GM18951 (cell line): ENCODE measurements at regions of chr19 and their contacts with region 1.

Region 1: GRCh38 chr19:3325451-3325850 is 40.9 kb upstream of the NFIC start:
- POLR2A ChIP-seq: no peak

Region 2: GRCh38 chr19:3471954-3472655 is 146.7 kb after region 1 on chr19:
- in situ Hi-C with region 1: loop called (anchors 5 kb)
- POLR2A ChIP-seq: no peak